ENCODE measurements at regions of chr1 and their contacts with region 1.

Region 1: GRCh38 chr1:151459331-151460046 is at the start of gene POGZ:
- DNase-seq: peak; percentile 91 to 93 (median 92)
- H3K4me3 ChIP-seq: peak within 1 kb of the TSS; percentile 83 to 98
- H3K4me3 Mint-ChIP-seq: peak within 1 kb of the TSS; percentile 87 to 96 (median 92)
- H3K27ac ChIP-seq: peak within 1 kb of the TSS; percentile 75
- H3K27ac Mint-ChIP-seq: peak within 1 kb of the TSS; percentile 95 to 99 (median 96)
- H3K4me1 ChIP-seq: peaks cover 31% of the 10 kb centered on the region
- H3K4me1 Mint-ChIP-seq: peaks cover 11 to 35% (median 23%) of the 10 kb centered on the region in 4 donors
- H3K27me3 ChIP-seq: no peaks in the 10 kb centered on the region
- H3K27me3 Mint-ChIP-seq: peaks cover 17% of the 10 kb centered on the region in 2 donors
- total RNA-seq, gene POGZ: 125 to 130 TPM

Region 2: DNA sequence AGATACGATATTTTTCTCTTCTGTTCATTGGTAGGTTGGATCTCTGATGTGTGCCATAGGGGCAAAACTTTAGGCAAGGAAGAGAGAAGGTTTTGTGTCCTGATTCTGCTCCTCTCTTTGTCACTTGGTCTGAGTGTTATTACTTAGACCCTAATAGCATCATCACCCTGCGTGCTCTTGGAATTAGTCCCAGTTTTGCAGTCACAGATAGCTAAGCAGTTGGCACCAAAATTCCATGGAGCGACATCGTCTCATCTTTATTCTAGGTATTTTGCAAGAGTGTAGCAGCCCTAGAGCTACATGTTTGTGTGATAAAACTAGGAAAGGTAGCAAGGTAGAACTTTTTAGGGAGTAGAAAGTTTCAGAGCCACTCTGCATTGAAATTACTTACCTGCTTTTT is 237.4 kb before region 1 on chr1:
- CTCF ChIA-PET with region 1: no interaction called
- POLR2A ChIA-PET with region 1: no interaction called
- intact Hi-C with region 1: no loop called
- DNase-seq: no peak
- H3K4me3 ChIP-seq: no peak overlapping the region
- H3K4me3 Mint-ChIP-seq: no peak overlapping the region
- H3K27ac ChIP-seq: no peak overlapping the region
- H3K27ac Mint-ChIP-seq: peak overlapping the region in 1 of 7 donors; percentile 63
- H3K4me1 ChIP-seq: no peaks in the 10 kb centered on the region
- H3K4me1 Mint-ChIP-seq: peaks cover under 1 to 11% (median 3%) of the 10 kb centered on the region in 4 donors
- H3K27me3 ChIP-seq: no peaks in the 10 kb centered on the region
- H3K27me3 Mint-ChIP-seq: no peaks in the 10 kb centered on the region

Region 3: GRCh38 chr1:151443846-151444782 is 15.4 kb before region 1 on chr1:
- CTCF ChIA-PET with region 1: interaction called, 17 read pairs
- POLR2A ChIA-PET with region 1: interaction called, 5 read pairs
- intact Hi-C with region 1: loop called (anchors 1 kb)
- DNase-seq: peak; percentile 68 to 82 (median 68)
- H3K4me3 ChIP-seq: no peak overlapping the region
- H3K4me3 Mint-ChIP-seq: no peak overlapping the region
- H3K27ac ChIP-seq: no peak overlapping the region
- H3K27ac Mint-ChIP-seq: peak overlapping the region in 3 of 7 donors; percentile 41 to 79 (median 69)
- H3K4me1 ChIP-seq: peaks cover 50% of the 10 kb centered on the region
- H3K4me1 Mint-ChIP-seq: peaks cover 32 to 65% (median 50%) of the 10 kb centered on the region in 4 donors
- H3K27me3 ChIP-seq: no peaks in the 10 kb centered on the region
- H3K27me3 Mint-ChIP-seq: no peaks in the 10 kb centered on the region

Region 4: GRCh38 chr1:151472856-151473731 is 13.6 kb after region 1 on chr1:
- CTCF ChIA-PET with region 1: interaction called, 3 read pairs
- POLR2A ChIA-PET with region 1: interaction called, 38 read pairs
- intact Hi-C with region 1: loop called (anchors 1 kb)
- DNase-seq: peak in 4 of 5 donors; percentile 24 to 64 (median 34)
- H3K4me3 ChIP-seq: peak overlapping the region in 1 of 2 donors; percentile 50
- H3K4me3 Mint-ChIP-seq: peak overlapping the region; percentile 62 to 88 (median 80)
- H3K27ac ChIP-seq: peak overlapping the region; percentile 35
- H3K27ac Mint-ChIP-seq: peak overlapping the region; percentile 9 to 84 (median 69)
- H3K4me1 ChIP-seq: no peaks in the 10 kb centered on the region
- H3K4me1 Mint-ChIP-seq: peaks cover 0 to 18% (median 7%) of the 10 kb centered on the region in 4 donors
- H3K27me3 ChIP-seq: no peaks in the 10 kb centered on the region
- H3K27me3 Mint-ChIP-seq: peaks cover 1 to 6% of the 10 kb centered on the region in 2 donors

Region 5: DNA sequence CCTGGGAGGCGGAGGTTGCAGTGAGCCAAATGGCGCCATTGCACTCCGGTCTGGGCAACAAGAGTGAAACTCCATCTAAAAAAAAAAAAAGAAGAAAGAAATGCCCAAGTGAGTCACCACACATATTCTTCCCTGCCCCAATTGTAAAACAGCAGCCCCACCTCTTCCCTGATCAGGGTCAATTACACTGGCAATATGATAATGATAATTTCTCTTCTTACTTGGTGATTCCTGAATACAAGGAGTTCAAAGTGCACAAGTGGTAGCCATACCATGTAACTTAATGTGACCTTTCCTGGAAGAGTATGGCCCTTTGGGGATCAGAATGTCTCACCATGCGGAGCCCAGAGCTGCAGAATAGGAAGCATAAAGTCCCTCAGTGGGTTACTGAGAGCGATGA is 39.9 kb after region 1 on chr1:
- CTCF ChIA-PET with region 1: no interaction called
- POLR2A ChIA-PET with region 1: no interaction called
- intact Hi-C with region 1: no loop called
- DNase-seq: no peak
- H3K4me3 ChIP-seq: no peak overlapping the region
- H3K4me3 Mint-ChIP-seq: no peak overlapping the region
- H3K27ac ChIP-seq: no peak overlapping the region
- H3K27ac Mint-ChIP-seq: peak overlapping the region in 1 of 7 donors; percentile 5
- H3K4me1 ChIP-seq: no peaks in the 10 kb centered on the region
- H3K4me1 Mint-ChIP-seq: no peaks in the 10 kb centered on the region
- H3K27me3 ChIP-seq: no peaks in the 10 kb centered on the region
- H3K27me3 Mint-ChIP-seq: peaks cover 0 to 2% of the 10 kb centered on the region in 2 donors

Region 6: GRCh38 chr1:151510957-151511635 is 51.6 kb after region 1 on chr1 and contains the start of gene CGN:
- CTCF ChIA-PET with region 1: no interaction called
- POLR2A ChIA-PET with region 1: interaction called, 4 read pairs
- intact Hi-C with region 1: loop called (anchors 1 kb)
- DNase-seq: peak; percentile 86 to 92 (median 86)
- H3K4me3 ChIP-seq: peak within 1 kb of the TSS; percentile 65 to 84
- H3K4me3 Mint-ChIP-seq: peak within 1 kb of the TSS; percentile 89 to 98 (median 93)
- H3K27ac ChIP-seq: peak within 1 kb of the TSS; percentile 53
- H3K27ac Mint-ChIP-seq: peak within 1 kb of the TSS; percentile 69 to 96 (median 91)
- H3K4me1 ChIP-seq: peaks cover 31% of the 10 kb centered on the region
- H3K4me1 Mint-ChIP-seq: peaks cover 13 to 39% (median 25%) of the 10 kb centered on the region in 4 donors
- H3K27me3 ChIP-seq: no peaks in the 10 kb centered on the region
- H3K27me3 Mint-ChIP-seq: no peaks in the 10 kb centered on the region
- total RNA-seq, gene CGN: 0.81 to 1.4 TPM

Region 7: DNA sequence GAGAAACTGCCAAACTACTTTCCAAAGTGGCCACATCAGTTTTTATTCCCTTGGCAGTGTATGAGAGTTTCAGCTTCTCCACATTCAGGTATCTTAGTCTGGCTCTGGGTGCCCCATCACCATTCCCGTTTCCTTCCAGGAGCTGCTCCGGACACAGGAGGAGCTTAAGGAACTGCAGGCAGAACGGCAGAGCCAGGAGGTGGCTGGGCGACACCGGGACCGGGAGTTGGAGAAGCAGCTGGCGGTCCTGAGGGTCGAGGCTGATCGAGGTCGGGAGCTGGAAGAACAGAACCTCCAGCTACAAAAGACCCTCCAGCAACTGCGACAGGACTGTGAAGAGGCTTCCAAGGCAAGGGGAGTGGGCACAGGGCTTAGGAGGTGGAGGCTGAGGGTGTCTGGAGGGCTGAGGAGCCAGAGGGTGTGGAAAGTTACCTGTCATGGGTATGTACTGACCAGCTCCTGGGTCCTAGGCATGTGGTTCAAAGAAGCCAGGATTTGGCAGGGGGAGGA is 69.8 kb after region 1 on chr1:
- CTCF ChIA-PET with region 1: no interaction called
- POLR2A ChIA-PET with region 1: no interaction called
- intact Hi-C with region 1: no loop called
- DNase-seq: no peak
- H3K4me3 ChIP-seq: no peak overlapping the region
- H3K4me3 Mint-ChIP-seq: no peak overlapping the region
- H3K27ac ChIP-seq: no peak overlapping the region
- H3K27ac Mint-ChIP-seq: no peak overlapping the region
- H3K4me1 ChIP-seq: no peaks in the 10 kb centered on the region
- H3K4me1 Mint-ChIP-seq: no peaks in the 10 kb centered on the region
- H3K27me3 ChIP-seq: no peaks in the 10 kb centered on the region
- H3K27me3 Mint-ChIP-seq: peaks cover 0 to 3% of the 10 kb centered on the region in 2 donors

Region 8: GRCh38 chr1:151539990-151540981 is 80.8 kb after region 1 on chr1 and contains the start of gene TUFT1:
- CTCF ChIA-PET with region 1: no interaction called
- POLR2A ChIA-PET with region 1: interaction called, 5 read pairs
- intact Hi-C with region 1: loop called (anchors 2 kb)
- DNase-seq: peak; percentile 92 to 96 (median 93)
- H3K4me3 ChIP-seq: peak within 1 kb of the TSS; percentile 50 to 62
- H3K4me3 Mint-ChIP-seq: peak within 1 kb of the TSS; percentile 95 to 98 (median 96)
- H3K27ac ChIP-seq: peak within 1 kb of the TSS; percentile 57
- H3K27ac Mint-ChIP-seq: peak within 1 kb of the TSS; percentile 78 to 97 (median 94)
- H3K4me1 ChIP-seq: peaks cover 18% of the 10 kb centered on the region
- H3K4me1 Mint-ChIP-seq: peaks cover 8 to 26% (median 19%) of the 10 kb centered on the region in 4 donors
- H3K27me3 ChIP-seq: no peaks in the 10 kb centered on the region
- H3K27me3 Mint-ChIP-seq: no peaks in the 10 kb centered on the region
- total RNA-seq, gene TUFT1: 3.5 to 4.4 TPM

Region 9: DNA sequence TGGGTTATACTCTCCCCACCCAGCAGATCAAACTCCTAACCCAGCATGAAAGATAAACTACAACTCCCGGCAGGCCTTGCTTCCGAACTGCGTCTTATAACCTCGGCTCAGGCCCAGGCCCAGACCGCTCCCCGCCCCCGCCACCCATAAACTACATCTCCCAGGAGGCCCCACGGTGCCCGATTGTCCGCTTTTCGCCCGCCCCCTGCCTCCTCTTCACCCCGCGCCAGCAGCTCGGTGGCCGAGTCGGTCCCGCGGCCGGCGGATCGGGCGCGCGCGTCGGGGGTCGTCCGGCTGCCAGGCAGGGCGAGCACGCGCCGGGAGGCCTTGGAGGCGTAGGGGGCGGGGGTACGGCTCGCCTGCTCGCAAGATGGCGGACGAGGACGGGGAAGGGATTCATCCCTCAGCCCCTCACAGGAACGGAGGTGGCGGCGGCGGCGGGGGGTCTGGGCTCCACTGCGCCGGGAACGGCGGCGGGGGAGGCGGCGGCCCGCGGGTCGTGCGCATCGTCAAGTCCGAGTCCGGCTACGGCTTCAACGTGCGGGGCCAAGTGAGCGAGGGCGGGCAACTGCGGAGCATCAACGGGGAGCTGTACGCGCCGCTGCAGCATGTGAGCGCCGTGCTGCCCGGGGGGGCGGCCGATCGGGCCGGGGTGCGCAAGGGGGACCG is 152.5 kb after region 1 on chr1 and contains the start of gene SNX27:
- CTCF ChIA-PET with region 1: no interaction called
- POLR2A ChIA-PET with region 1: interaction called, 4 read pairs
- intact Hi-C with region 1: loop called (anchors 5 kb)
- DNase-seq: peak; percentile 87 to 96 (median 89)
- H3K4me3 ChIP-seq: peak within 1 kb of the TSS; percentile 73 to 77
- H3K4me3 Mint-ChIP-seq: peak within 1 kb of the TSS; percentile 98 to 100 (median 99)
- H3K27ac ChIP-seq: peak within 1 kb of the TSS; percentile 87
- H3K27ac Mint-ChIP-seq: peak within 1 kb of the TSS; percentile 89 to 99 (median 97)
- H3K4me1 ChIP-seq: peaks cover 32% of the 10 kb centered on the region
- H3K4me1 Mint-ChIP-seq: peaks cover 31 to 46% (median 39%) of the 10 kb centered on the region in 4 donors
- H3K27me3 ChIP-seq: no peaks in the 10 kb centered on the region
- H3K27me3 Mint-ChIP-seq: peaks cover 0 to 1% of the 10 kb centered on the region in 2 donors
- total RNA-seq, gene SNX27: 40.0 to 44.3 TPM